ENCODE measurements at regions of chr1 and their contacts with region 1.

Region 1: GRCh38 chr1:2227346-2228153 is 569 bp upstream of the SKI start:
- DNase-seq: no peak
- H3K4me3 ChIP-seq: peak overlapping the region; percentile 83
- CTCF ChIP-seq: no peak

Region 2: GRCh38 chr1:2152954-2153353 is 74.6 kb before region 1 on chr1:
- CTCF ChIA-PET with region 1: no interaction called
- POLR2A ChIA-PET with region 1: no interaction called
- DNase-seq: no peak
- H3K4me3 ChIP-seq: no peak overlapping the region
- CTCF ChIP-seq: no peak

Region 3: GRCh38 chr1:2205191-2205952 is 22.2 kb before region 1 on chr1:
- CTCF ChIA-PET with region 1: interaction called, 4 read pairs
- POLR2A ChIA-PET with region 1: interaction called, 10 read pairs
- DNase-seq: no peak
- H3K4me3 ChIP-seq: peak overlapping the region; percentile 53
- CTCF ChIP-seq: no peak

Region 4: DNA sequence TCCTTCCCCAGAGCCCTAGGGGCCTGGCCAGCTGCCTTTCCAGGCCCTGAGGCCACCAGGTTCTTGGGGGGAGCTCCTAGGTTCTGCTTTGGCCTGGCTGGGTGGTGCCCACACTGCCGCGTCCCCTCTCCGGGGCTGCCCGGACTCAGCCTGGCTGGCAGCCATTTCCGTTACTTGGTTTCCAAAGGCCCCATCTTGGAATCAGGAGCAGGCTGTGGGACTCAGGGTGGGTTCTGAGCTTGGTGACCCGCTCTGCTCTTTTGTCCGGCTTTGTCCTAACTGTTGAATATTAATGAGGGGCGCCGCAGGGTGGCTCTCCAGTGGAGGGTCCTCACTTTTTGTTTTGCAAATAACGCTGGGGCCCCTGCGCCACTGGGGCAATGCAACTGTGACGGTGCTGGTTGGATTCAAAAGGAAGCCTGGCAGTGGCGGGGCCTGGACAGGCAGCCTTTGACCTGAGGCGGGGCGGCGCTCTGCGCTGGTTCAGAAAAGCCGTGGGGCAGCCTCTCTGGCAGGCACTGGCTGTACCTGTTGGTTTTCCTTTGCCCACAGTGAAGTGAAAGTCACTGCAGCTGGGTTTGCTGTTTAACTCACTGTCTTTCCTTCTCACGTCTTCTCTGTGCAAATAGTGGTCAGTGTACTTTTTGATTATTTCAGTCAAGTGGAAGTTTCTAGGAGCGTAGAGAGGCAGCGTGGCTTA is 20.7 kb after region 1 on chr1:
- CTCF ChIA-PET with region 1: no interaction called
- POLR2A ChIA-PET with region 1: no interaction called
- DNase-seq: no peak
- H3K4me3 ChIP-seq: no peak overlapping the region
- CTCF ChIP-seq: no peak

Region 5: GRCh38 chr1:2275796-2276536 is 48.4 kb after region 1 on chr1:
- CTCF ChIA-PET with region 1: no interaction called
- POLR2A ChIA-PET with region 1: no interaction called
- DNase-seq: no peak
- H3K4me3 ChIP-seq: no peak overlapping the region
- CTCF ChIP-seq: no peak

Measured in AG04449 (cell line).